Aorta (tissue), 5 donors: ENCODE measurements at regions of chr10 and their contacts with region 1.

Region 1: DNA sequence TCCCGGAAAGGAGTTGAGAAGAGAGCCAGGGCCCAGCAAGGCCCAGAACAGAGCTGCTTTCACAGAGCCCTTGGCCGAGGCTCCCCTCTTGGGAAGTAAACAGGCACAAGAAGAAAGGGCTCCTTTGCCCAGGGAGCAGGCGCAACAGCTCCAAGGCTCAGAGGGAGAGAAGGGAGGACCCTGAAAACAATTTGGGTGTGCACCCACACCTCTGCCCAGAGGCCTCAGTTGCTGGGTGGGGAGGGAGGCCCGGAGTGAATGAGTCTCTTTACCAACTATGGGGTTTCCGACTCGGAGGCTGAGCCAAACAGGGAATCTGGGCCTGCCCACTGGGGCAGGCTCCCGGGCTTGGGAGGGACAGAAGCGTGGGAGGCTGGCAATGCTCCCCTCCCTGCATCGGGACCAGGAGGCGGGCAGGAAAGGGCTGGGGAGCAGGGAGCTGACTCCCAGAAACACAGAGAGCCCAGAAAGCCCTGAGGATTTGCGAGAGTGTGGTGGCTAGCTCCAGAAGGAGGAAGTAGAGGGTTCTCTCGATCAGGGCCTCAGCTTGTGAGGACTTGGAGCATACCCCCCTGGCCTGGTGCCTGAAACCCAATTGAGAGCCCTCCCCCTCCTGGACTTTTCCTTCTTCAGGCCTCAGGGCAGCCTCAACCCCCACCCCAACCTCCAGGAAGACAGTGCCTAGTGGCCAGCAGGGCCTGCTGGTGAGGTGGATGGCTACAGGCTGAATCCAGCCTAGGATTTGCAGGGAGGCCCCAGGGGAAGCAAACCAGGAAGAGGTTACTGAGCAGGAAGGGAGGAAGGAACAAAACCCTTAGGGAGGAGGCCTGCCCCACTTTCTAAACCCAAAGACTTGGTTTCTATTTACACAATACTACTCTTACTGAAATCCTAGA is 6.2 kb downstream of the C10orf105 start:
- DNase-seq: peak; percentile 94 to 95
- ATAC-seq: peak; percentile 89
- H3K4me3 ChIP-seq: no peak overlapping the region
- H3K27ac ChIP-seq: peak overlapping the region; percentile 38 to 59
- H3K4me1 ChIP-seq: no peaks in the 10 kb centered on the region
- H3K27me3 ChIP-seq: no peaks in the 10 kb centered on the region

Region 2: GRCh38 chr10:71647526-71648253 is 65.7 kb before region 1 on chr10:
- intact Hi-C with region 1: no loop called
- DNase-seq: no peak
- ATAC-seq: no peak
- H3K4me3 ChIP-seq: no peak overlapping the region
- H3K27ac ChIP-seq: no peak overlapping the region
- H3K4me1 ChIP-seq: no peaks in the 10 kb centered on the region
- H3K27me3 ChIP-seq: no peaks in the 10 kb centered on the region

Region 3: DNA sequence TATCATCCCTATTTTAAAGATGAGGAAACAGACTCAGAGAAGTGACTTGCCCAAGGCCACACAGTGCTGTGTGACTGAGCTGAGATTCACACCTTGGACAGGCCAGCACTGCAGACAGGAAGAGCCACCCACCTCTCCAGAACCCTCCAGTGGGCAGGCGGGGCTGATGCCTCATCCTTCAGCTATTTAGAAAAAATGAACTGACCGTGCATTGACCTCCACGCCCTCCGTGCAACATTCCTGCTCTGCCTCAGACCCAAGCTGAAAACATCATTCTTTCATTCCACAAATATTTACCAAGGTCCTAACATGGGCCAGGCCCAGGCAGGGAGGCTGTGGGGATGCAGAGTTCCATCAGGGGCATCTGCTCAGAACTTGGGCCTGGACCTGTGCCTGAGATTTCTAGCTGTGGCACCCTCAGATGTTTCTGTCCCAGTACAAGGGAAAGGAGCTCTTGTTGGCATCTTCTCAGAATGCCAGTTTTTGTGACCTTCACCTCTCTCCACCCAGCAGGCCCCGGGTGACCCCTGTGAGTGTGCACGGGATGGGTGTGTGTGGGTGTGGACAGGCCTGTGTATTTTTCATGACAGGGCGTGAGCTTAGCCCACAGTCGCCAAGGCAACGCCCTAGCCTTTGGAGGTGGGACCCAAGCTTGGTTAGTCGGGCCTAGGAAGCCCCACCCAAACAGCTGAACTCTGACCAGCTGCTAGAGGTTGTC is 53.5 kb after region 1 on chr10:
- intact Hi-C with region 1: loop called (anchors 2 to 5 kb)
- DNase-seq: peak; percentile 81 to 90
- ATAC-seq: peak; percentile 61
- H3K4me3 ChIP-seq: no peak overlapping the region
- H3K27ac ChIP-seq: peak overlapping the region; percentile 34 to 80
- H3K4me1 ChIP-seq: peaks cover 0 to 7% of the 10 kb centered on the region in 2 donors
- H3K27me3 ChIP-seq: no peaks in the 10 kb centered on the region

Region 4: GRCh38 chr10:71771821-71772617 is 58.6 kb after region 1 on chr10:
- intact Hi-C with region 1: loop called (anchors 2 to 5 kb)
- DNase-seq: peak; percentile 91 to 92
- ATAC-seq: peak; percentile 74
- H3K4me3 ChIP-seq: no peak overlapping the region
- H3K27ac ChIP-seq: peak overlapping the region; percentile 71 to 98
- H3K4me1 ChIP-seq: peaks cover 0 to 8% of the 10 kb centered on the region in 2 donors
- H3K27me3 ChIP-seq: no peaks in the 10 kb centered on the region